ENCODE measurements at regions of chr11 and their contacts with region 1.

Region 1: DNA sequence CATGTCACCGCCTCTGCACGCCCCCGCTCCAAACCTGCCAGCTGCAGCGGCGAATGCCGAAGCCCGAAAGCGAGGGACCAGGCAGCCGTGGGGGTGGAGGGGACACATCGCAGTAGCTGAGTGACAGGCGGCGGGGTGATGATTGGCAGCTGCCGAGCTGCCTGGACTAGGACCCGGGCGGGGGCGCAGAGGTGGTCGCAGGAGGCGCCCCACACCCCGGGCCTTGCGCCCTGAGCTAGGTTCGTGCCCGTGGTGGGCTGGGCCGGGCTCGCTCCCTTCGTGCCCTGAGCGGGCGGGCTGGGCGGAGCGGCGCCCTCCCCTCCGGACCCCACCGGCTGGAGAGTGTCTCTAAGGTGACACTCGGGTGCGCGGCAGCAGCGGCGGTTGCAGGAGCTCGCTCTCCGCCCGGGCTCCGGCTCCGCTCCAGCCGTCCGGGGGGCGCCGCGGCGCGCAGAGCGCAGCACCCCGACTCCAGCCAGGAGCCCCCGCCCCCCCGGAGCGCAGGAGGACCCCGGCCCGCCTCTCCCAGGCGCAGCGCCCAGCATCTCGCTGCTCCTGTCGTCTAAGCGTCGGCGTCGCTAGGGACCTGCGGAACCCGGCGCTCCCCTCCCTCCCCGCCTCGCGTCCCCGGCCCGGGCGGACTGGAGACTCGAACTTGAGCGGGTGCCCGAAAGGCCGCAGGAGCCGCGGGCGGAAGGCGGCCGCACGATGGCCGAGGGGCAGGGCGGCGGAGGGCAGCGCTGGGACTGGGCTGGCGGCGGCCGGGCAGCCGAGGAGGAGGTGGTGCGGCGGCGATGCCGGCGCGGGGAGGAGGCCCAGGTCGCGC is 14.5 kb upstream of the DGKZ start:
- DNase-seq: peak in 10 of 14 experiments; percentile 30 to 71 (median 54)
- ATAC-seq: peak; percentile 6
- H3K4me3 ChIP-seq: peak overlapping the region; percentile 71
- H3K4me3 Mint-ChIP-seq: peak overlapping the region; percentile 94
- H3K27ac ChIP-seq: peak overlapping the region in 1 of 2 donors; percentile 73
- H3K27ac Mint-ChIP-seq: peak overlapping the region; percentile 91
- H3K4me1 ChIP-seq: peaks cover 80% of the 10 kb centered on the region
- H3K4me1 Mint-ChIP-seq: peaks cover 76% of the 10 kb centered on the region
- H3K27me3 ChIP-seq: peaks cover 0 to 5% of the 10 kb centered on the region in 2 experiments
- H3K27me3 Mint-ChIP-seq: no peaks in the 10 kb centered on the region
- CTCF ChIP-seq: no peak

Region 2: GRCh38 chr11:46127150-46127638 is 205.6 kb before region 1 on chr11:
- CTCF ChIA-PET with region 1: no interaction called
- POLR2A ChIA-PET with region 1: no interaction called
- intact Hi-C with region 1: no loop called
- DNase-seq: peak; percentile 16 to 88 (median 41)
- ATAC-seq: peak; percentile 99
- H3K4me3 ChIP-seq: no peak overlapping the region
- H3K4me3 Mint-ChIP-seq: peak overlapping the region; percentile 2
- H3K27ac ChIP-seq: no peak overlapping the region
- H3K27ac Mint-ChIP-seq: peak overlapping the region; percentile 43
- H3K4me1 ChIP-seq: peaks cover 12% of the 10 kb centered on the region
- H3K4me1 Mint-ChIP-seq: peaks cover 16% of the 10 kb centered on the region
- H3K27me3 ChIP-seq: no peaks in the 10 kb centered on the region
- H3K27me3 Mint-ChIP-seq: no peaks in the 10 kb centered on the region
- CTCF ChIP-seq: peak; percentile 22

Region 3: GRCh38 chr11:46295312-46296058 is 37.3 kb before region 1 on chr11:
- CTCF ChIA-PET with region 1: no interaction called
- POLR2A ChIA-PET with region 1: interaction called, 29 read pairs
- intact Hi-C with region 1: loop called in 1 of 2 experiments (anchors 5 kb)
- DNase-seq: peak; percentile 54 to 85 (median 73)
- ATAC-seq: peak; percentile 100
- H3K4me3 ChIP-seq: peak overlapping the region; percentile 67
- H3K4me3 Mint-ChIP-seq: peak overlapping the region; percentile 89
- H3K27ac ChIP-seq: no peak overlapping the region
- H3K27ac Mint-ChIP-seq: no peak overlapping the region
- H3K4me1 ChIP-seq: peaks cover 22% of the 10 kb centered on the region
- H3K4me1 Mint-ChIP-seq: peaks cover 14% of the 10 kb centered on the region
- H3K27me3 ChIP-seq: peaks cover 6 to 16% of the 10 kb centered on the region in 2 experiments
- H3K27me3 Mint-ChIP-seq: peaks cover 11% of the 10 kb centered on the region
- CTCF ChIP-seq: no peak

Region 4: DNA sequence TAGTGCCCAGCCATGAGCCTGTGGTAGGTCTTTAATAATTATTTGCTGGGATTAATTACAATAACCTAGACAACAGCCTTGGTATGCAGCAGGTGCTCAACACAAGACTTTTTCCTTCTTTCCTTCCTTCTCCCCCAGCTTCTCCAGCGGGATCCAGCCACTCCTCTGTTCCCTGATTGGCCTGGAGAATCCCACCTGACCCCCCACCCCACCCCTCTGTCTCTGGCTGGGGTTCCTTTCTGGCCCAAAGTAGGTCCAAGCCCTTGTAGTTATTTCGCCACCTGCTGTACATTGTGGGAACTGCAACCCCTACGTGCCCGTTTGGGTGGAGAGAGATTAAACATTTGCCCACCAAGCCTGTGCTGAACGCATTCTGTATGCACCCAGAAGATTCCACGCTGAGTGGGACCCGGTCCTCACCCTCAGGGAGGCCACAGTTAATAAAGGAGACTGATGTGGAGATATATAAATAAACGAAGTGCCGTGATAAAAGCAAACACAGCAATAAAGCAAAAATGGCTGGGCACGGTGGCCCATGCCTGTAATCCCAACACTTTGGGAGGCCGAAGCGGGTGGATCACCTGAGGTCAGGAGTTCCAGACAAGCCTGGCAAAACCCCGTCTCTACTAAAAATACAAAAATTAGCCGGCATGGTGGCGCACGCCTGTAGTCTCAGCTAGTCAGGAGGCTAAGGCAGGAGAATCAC is 17.6 kb before region 1 on chr11:
- CTCF ChIA-PET with region 1: interaction called, 6 read pairs
- POLR2A ChIA-PET with region 1: interaction called, 16 read pairs
- intact Hi-C with region 1: loop called in 1 of 2 experiments (anchors 2 kb)
- DNase-seq: peak; percentile 59 to 86 (median 70)
- ATAC-seq: peak; percentile 81
- H3K4me3 ChIP-seq: no peak overlapping the region
- H3K4me3 Mint-ChIP-seq: no peak overlapping the region
- H3K27ac ChIP-seq: no peak overlapping the region
- H3K27ac Mint-ChIP-seq: no peak overlapping the region
- H3K4me1 ChIP-seq: peaks cover 31% of the 10 kb centered on the region
- H3K4me1 Mint-ChIP-seq: peaks cover 23% of the 10 kb centered on the region
- H3K27me3 ChIP-seq: no peaks in the 10 kb centered on the region
- H3K27me3 Mint-ChIP-seq: no peaks in the 10 kb centered on the region
- CTCF ChIP-seq: peak; percentile 97

Measured in CD4-positive, alpha-beta T cell (primary cell).